Ascending aorta (tissue), 2 donors: ENCODE measurements at regions of chr12 and their contacts with region 1.

Region 1: DNA sequence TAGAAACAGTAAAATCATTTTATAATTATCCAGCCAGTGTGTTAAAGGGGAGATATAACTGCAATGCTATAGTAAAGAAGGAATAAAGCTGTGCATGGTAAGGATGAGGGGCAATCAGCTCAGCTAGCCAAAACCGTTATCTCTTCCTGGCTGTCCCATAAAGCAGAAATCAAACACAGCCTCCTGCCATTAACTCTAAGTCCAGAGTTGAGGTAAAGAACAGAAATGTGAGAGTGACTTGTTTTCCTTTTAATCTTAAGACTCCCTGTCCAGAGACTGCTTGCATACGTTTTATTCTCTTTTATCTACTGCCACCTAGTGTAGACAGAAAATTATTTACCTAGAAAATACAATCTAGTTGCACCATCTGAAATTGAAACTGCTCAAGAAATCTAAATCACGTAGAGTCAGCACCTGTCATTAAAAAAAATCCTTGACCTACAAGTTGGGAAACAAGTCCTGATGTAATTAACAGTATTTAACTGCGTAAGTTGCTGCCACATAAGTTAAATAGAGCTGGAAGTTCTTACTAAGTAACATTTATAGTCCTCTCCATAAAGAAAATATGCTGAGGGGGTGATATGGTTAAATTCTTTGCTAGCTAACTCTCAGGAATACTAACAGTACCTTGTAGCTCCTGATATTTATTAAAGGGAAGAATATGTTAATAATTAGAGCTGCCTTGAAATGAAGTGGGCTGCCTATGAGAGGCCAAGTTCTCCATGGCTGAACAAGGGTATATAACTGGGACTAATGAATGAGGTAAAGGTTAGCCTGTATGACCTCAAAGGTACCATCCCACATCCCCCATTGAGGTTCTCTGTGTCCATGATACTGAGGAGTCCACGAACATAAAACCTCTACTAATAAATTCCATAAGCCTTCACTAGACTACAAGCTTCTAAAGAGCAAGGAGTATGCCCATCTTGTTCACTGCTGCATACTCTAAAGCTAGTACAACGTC is 62.7 kb downstream of the GALNT4 start:
- DNase-seq: no peak
- H3K4me3 ChIP-seq: peak overlapping the region in 1 of 2 donors; percentile 43
- H3K27ac ChIP-seq: peak overlapping the region in 1 of 2 donors; percentile 31
- H3K4me1 ChIP-seq: peaks cover 3 to 4% of the 10 kb centered on the region in 2 donors
- H3K27me3 ChIP-seq: no peaks in the 10 kb centered on the region
- CTCF ChIP-seq: peak in 2 of 3 experiments; percentile 45 to 64

Region 2: DNA sequence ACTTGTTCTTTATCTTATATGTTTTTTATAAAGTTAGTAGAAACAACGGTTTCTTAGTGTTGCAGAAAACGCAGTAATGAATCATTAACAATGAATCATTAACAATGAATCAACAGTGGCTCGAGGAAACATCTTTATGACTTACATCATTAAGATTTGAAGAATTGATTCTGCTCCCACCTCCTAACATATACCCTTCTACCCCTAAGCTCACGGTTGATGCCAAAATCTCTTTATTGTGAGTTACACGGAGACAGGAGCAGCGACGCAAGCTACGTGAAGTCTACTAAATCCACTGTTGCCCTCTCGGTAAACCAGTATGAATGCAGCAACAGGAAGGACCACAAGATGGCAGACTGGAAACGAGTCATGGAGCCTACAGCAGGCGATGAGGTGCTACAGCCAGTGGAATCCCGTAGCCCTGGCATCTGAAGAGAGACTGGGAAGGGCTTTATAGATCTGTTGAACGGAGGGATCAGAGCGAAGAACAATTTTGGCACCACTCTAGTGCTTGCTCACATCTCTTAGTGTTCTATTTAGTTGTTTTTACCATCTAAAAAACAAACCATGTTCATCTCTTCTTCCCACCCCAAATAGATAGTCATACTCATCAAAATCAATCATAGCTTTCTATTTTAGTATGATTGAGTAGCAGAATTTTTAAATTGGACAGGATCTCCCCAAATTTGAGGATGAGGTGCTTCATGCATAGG is 442.4 kb before region 1 on chr12:
- intact Hi-C with region 1: loop called (anchors 1 kb)
- DNase-seq: peak; percentile 11 to 91
- H3K4me3 ChIP-seq: peak overlapping the region in 1 of 2 donors; percentile 53
- H3K27ac ChIP-seq: no peak overlapping the region
- H3K4me1 ChIP-seq: peaks cover 0 to 4% of the 10 kb centered on the region in 2 donors
- H3K27me3 ChIP-seq: no peaks in the 10 kb centered on the region
- CTCF ChIP-seq: peak; percentile 64 to 84 (median 82)

Region 3: GRCh38 chr12:89051065-89051677 is 410.8 kb before region 1 on chr12:
- intact Hi-C with region 1: loop called (anchors 1 kb)
- DNase-seq: no peak
- H3K4me3 ChIP-seq: no peak overlapping the region
- H3K27ac ChIP-seq: no peak overlapping the region
- H3K4me1 ChIP-seq: no peaks in the 10 kb centered on the region
- H3K27me3 ChIP-seq: no peaks in the 10 kb centered on the region
- CTCF ChIP-seq: peak; percentile 83 to 89 (median 87)